A549 (cell line): ENCODE measurements at regions of chr3 and their contacts with region 1.

Region 1: GRCh38 chr3:98901392-98902350 is at the start of gene DCBLD2:
- DNase-seq: peak; percentile 94 to 99
- ATAC-seq: peak; percentile 93 to 97
- H3K4me3 ChIP-seq: peak within 1 kb of the TSS; percentile 93
- H3K27ac ChIP-seq: peak within 1 kb of the TSS; percentile 93 to 95
- H3K4me1 ChIP-seq: peaks cover 35% of the 10 kb centered on the region
- CTCF ChIP-seq: no peak
- EP300 ChIP-seq: no peak; a peak in 1 of 5 replicates
- POLR2A ChIP-seq: peak; percentile 96
- RAD21 ChIP-seq: no peak; a peak in 1 of 5 replicates
- polyA plus RNA-seq, gene DCBLD2: 582 and 623 TPM in 2 replicates

Region 2: DNA sequence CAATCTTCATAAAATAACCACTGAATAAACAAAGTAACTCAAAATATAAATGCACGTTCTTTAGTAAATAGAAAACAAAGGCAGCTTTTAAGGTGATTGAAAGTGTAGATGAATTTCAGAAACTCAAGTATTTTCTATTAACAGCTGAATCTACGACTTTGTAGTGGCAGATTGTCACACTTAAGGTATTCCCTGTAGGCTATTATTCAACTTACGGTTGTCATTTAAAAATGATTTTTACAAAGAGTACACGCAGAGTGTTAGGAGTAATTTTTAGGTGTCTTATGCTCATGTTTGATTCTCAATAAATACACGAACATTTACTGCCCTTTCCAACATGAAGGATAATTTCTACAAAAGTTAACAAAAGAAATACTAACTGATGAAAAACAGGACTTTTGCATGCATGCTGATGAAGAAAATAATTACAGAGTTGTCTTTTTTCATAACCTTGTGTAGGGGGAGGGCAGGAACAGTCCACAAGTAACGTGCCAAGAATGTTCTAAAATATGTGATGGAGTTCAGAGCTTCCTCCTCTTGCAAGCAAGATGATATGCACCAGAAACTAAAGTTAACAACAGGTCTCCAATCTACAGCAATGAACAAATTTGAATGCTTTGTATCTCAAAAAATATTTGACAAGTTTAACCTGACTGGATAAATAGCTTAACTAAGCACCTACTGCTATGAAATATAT is 16.8 kb before region 1 on chr3:
- CTCF ChIA-PET with region 1: interaction called, 3 read pairs
- POLR2A ChIA-PET with region 1: interaction called, 18 read pairs
- DNase-seq: no peak
- ATAC-seq: peak; percentile 36 to 60; a peak in 4 of 6 replicates
- H3K4me3 ChIP-seq: peak overlapping the region; percentile 16; the same call in 1 of the 3 replicates
- H3K27ac ChIP-seq: peak overlapping the region; percentile 55 to 58
- H3K4me1 ChIP-seq: peaks cover 79% of the 10 kb centered on the region
- CTCF ChIP-seq: no peak
- EP300 ChIP-seq: no peak
- POLR2A ChIP-seq: no peak
- RAD21 ChIP-seq: no peak

Region 3: GRCh38 chr3:98914210-98915080 is 12.8 kb after region 1 on chr3:
- CTCF ChIA-PET with region 1: interaction called, 8 read pairs
- POLR2A ChIA-PET with region 1: interaction called, 57 read pairs
- DNase-seq: peak; percentile 65 to 91
- ATAC-seq: peak; percentile 91 to 96
- H3K4me3 ChIP-seq: no peak overlapping the region
- H3K27ac ChIP-seq: peak overlapping the region; percentile 87 to 99
- H3K4me1 ChIP-seq: peaks cover 71% of the 10 kb centered on the region
- CTCF ChIP-seq: no peak
- EP300 ChIP-seq: peak; percentile 91 to 97; a peak in 4 of 5 replicates
- POLR2A ChIP-seq: no peak
- RAD21 ChIP-seq: peak in 1 of 2 experiments; percentile 54; a peak in 2 of 5 replicates

Region 4: GRCh38 chr3:98921957-98922356 is 20.3 kb after region 1 on chr3:
- CTCF ChIA-PET with region 1: interaction called, 8 read pairs
- POLR2A ChIA-PET with region 1: interaction called, 31 read pairs
- DNase-seq: no peak
- ATAC-seq: no peak
- H3K4me3 ChIP-seq: no peak overlapping the region
- H3K27ac ChIP-seq: peak overlapping the region; percentile 95 to 99
- H3K4me1 ChIP-seq: peaks cover 75% of the 10 kb centered on the region
- CTCF ChIP-seq: no peak
- EP300 ChIP-seq: no peak
- POLR2A ChIP-seq: no peak
- RAD21 ChIP-seq: no peak

Region 5: DNA sequence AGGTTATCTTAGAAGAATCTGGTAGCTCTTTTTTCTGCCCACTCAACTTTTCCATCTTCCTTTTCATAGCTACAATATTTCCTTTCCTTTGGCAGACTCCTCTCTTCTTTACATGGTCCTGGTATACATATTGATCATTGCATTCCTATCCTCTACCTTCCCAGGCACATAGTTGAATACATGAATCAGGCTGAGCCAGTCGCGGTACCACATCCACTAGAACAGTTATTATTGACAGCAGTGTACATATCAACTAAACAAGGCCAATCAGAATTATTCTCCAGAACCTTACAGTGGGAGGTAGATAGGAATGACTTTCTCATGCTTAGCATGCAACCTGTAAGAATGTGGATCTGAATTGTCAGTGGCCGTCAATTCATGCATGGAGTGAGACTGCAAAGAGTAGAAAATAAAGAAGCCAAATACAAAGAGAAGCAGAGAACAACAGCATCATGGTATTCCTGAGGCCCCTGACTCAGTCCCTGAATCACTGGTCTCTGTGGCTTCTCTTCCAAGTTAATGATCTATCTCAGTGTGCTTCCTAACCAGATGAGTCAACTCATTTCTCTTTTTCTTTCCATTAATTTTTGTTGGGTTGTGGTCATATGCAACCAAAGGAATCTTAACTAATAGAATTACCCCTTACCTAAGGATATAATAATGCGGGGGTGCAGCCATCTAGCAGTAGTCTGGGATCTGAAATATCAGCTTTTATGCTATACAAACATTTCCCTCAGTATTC is 60.7 kb after region 1 on chr3:
- CTCF ChIA-PET with region 1: interaction called, 5 read pairs
- POLR2A ChIA-PET with region 1: interaction called, 91 read pairs
- DNase-seq: peak; percentile 81 to 85
- ATAC-seq: peak; percentile 87 to 88
- H3K4me3 ChIP-seq: no peak overlapping the region; the same call in 2 of the 3 replicates
- H3K27ac ChIP-seq: peak overlapping the region; percentile 96 to 97
- H3K4me1 ChIP-seq: peaks cover 68% of the 10 kb centered on the region
- CTCF ChIP-seq: no peak
- EP300 ChIP-seq: peak; percentile 42 to 75; a peak in 1 of 5 replicates
- POLR2A ChIP-seq: no peak
- RAD21 ChIP-seq: peak in 1 of 2 experiments; percentile 8; a peak in 3 of 5 replicates

Region 6: GRCh38 chr3:98972155-98972554 is 70.5 kb after region 1 on chr3:
- CTCF ChIA-PET with region 1: interaction called, 4 read pairs
- POLR2A ChIA-PET with region 1: interaction called, 91 read pairs
- DNase-seq: peak in 1 of 2 experiments; percentile 90
- ATAC-seq: peak; percentile 77 to 83
- H3K4me3 ChIP-seq: peak overlapping the region; percentile 1; the same call in 1 of the 3 replicates
- H3K27ac ChIP-seq: peak overlapping the region; percentile 96 to 97
- H3K4me1 ChIP-seq: peaks cover 53% of the 10 kb centered on the region
- CTCF ChIP-seq: no peak
- EP300 ChIP-seq: peak; percentile 45 to 74; a peak in 2 of 5 replicates
- POLR2A ChIP-seq: no peak
- RAD21 ChIP-seq: peak; percentile 26 to 30; a peak in 1 of 5 replicates

Region 7: GRCh38 chr3:98980915-98981596 is 79.4 kb after region 1 on chr3:
- CTCF ChIA-PET with region 1: interaction called, 6 read pairs
- POLR2A ChIA-PET with region 1: interaction called, 146 read pairs
- DNase-seq: peak in 1 of 2 experiments; percentile 51
- ATAC-seq: peak; percentile 31 to 57; a peak in 4 of 6 replicates
- H3K4me3 ChIP-seq: peak overlapping the region; percentile 44
- H3K27ac ChIP-seq: peak overlapping the region; percentile 86
- H3K4me1 ChIP-seq: peaks cover 80% of the 10 kb centered on the region
- CTCF ChIP-seq: no peak
- EP300 ChIP-seq: no peak
- POLR2A ChIP-seq: no peak
- RAD21 ChIP-seq: no peak